B cell (primary cell): ENCODE measurements at regions of chr18 and their contacts with region 1.

Region 1: GRCh38 chr18:35343936-35344735 is at the start of gene ZNF24:
- DNase-seq: peak; percentile 96
- ATAC-seq: peak; percentile 84
- H3K4me3 ChIP-seq: peak within 1 kb of the TSS; percentile 84 to 99 (median 97)
- H3K4me3 Mint-ChIP-seq: peak within 1 kb of the TSS; percentile 100
- H3K27ac ChIP-seq: peak within 1 kb of the TSS; percentile 99
- H3K27ac Mint-ChIP-seq: peak within 1 kb of the TSS; percentile 99
- H3K4me1 ChIP-seq: peaks cover 24 to 35% of the 10 kb centered on the region in 2 donors
- H3K4me1 Mint-ChIP-seq: peaks cover 64% of the 10 kb centered on the region
- H3K27me3 ChIP-seq: no peaks in the 10 kb centered on the region
- H3K27me3 Mint-ChIP-seq: no peaks in the 10 kb centered on the region
- CTCF ChIP-seq: no peak
- total RNA-seq, gene ZNF24: 80.1 and 83.7 TPM in 2 replicates

Region 2: DNA sequence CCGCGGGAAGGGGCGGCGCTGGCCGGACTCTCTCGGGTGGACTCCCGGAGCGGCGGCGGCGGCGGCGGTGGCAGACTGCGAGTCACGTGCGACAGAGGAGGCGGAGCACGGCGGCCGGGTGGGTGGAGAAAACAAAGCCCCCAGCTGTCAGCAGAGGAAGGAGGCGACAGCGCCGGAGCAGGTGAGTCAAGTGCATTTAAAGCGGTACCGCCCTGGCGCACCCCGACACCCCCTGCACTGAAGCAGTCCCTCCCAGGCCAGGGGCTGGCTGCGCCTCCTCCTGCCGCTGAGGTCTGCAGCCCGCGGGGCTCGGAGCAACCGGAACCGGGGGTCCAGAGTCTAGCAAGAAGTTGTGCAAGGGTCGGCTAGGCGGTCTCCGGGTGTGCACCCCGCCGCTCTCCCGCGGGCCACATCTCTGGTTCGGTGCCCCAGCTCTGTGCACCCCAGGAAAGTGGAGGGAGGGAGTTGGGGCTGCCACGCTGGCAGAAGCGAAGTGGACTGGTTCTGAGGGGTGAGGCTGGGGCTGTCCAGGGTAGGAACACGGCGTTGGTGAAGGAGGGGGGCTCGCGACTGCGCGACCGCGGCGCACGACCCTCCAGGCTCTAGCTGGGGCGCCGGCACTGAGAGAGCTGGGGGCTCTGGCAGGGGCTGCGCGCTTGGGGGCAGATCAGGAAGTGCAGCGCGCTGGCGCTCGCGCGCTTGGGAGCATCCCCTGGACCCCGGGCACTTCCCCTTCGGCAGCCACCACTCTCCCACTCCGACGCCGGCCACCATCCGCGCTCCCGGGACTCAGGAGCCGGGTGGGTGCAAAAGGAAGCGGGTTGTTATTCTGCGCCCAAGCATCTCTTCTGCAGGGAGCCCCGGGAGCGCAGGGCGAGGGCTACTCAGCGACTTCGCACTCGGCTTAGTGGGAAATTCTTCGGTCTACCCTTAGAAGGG is 367.0 kb before region 1 on chr18:
- CTCF ChIA-PET with region 1: no interaction called
- POLR2A ChIA-PET with region 1: no interaction called
- intact Hi-C with region 1: loop called (anchors 2 kb)
- DNase-seq: peak; percentile 83
- ATAC-seq: peak; percentile 79
- H3K4me3 ChIP-seq: peak overlapping the region; percentile 81 to 96 (median 89)
- H3K4me3 Mint-ChIP-seq: peak overlapping the region; percentile 92
- H3K27ac ChIP-seq: peak overlapping the region in 1 of 2 donors; percentile 16
- H3K27ac Mint-ChIP-seq: no peak overlapping the region
- H3K4me1 ChIP-seq: peaks cover 17 to 26% of the 10 kb centered on the region in 2 donors
- H3K4me1 Mint-ChIP-seq: peaks cover 26% of the 10 kb centered on the region
- H3K27me3 ChIP-seq: peaks cover 0 to 20% (median 11%) of the 10 kb centered on the region in 4 experiments
- H3K27me3 Mint-ChIP-seq: peaks cover 26% of the 10 kb centered on the region
- CTCF ChIP-seq: no peak

Region 3: GRCh38 chr18:35267161-35267651 is 76.9 kb before region 1 on chr18:
- CTCF ChIA-PET with region 1: no interaction called
- POLR2A ChIA-PET with region 1: interaction called, 8 read pairs
- intact Hi-C with region 1: loop called (anchors 1 kb)
- DNase-seq: peak; percentile 84
- ATAC-seq: peak; percentile 85
- H3K4me3 ChIP-seq: peak overlapping the region; percentile 34 to 79 (median 76)
- H3K4me3 Mint-ChIP-seq: peak overlapping the region; percentile 95
- H3K27ac ChIP-seq: peak overlapping the region; percentile 81 to 93
- H3K27ac Mint-ChIP-seq: peak overlapping the region; percentile 95
- H3K4me1 ChIP-seq: peaks cover 18 to 23% of the 10 kb centered on the region in 2 donors
- H3K4me1 Mint-ChIP-seq: peaks cover 31% of the 10 kb centered on the region
- H3K27me3 ChIP-seq: no peaks in the 10 kb centered on the region
- H3K27me3 Mint-ChIP-seq: no peaks in the 10 kb centered on the region
- CTCF ChIP-seq: no peak

Region 4: GRCh38 chr18:35355140-35355618 is 11.0 kb after region 1 on chr18:
- CTCF ChIA-PET with region 1: interaction called, 22 read pairs
- POLR2A ChIA-PET with region 1: no interaction called
- intact Hi-C with region 1: loop called (anchors 1 kb)
- DNase-seq: peak; percentile 85
- ATAC-seq: peak; percentile 99
- H3K4me3 ChIP-seq: no peak overlapping the region
- H3K4me3 Mint-ChIP-seq: no peak overlapping the region
- H3K27ac ChIP-seq: no peak overlapping the region
- H3K27ac Mint-ChIP-seq: no peak overlapping the region
- H3K4me1 ChIP-seq: no peaks in the 10 kb centered on the region
- H3K4me1 Mint-ChIP-seq: no peaks in the 10 kb centered on the region
- H3K27me3 ChIP-seq: no peaks in the 10 kb centered on the region
- H3K27me3 Mint-ChIP-seq: no peaks in the 10 kb centered on the region
- CTCF ChIP-seq: peak; percentile 76

Region 5: GRCh38 chr18:35497370-35498197 is 153.4 kb after region 1 on chr18 and contains the start of gene INO80C:
- CTCF ChIA-PET with region 1: interaction called, 3 read pairs
- POLR2A ChIA-PET with region 1: interaction called, 3 read pairs
- intact Hi-C with region 1: loop called (anchors 2 kb)
- DNase-seq: peak; percentile 97
- ATAC-seq: peak; percentile 89
- H3K4me3 ChIP-seq: peak within 1 kb of the TSS; percentile 64 to 98 (median 94)
- H3K4me3 Mint-ChIP-seq: peak within 1 kb of the TSS; percentile 94
- H3K27ac ChIP-seq: peak within 1 kb of the TSS; percentile 92 to 95
- H3K27ac Mint-ChIP-seq: peak within 1 kb of the TSS; percentile 99
- H3K4me1 ChIP-seq: peaks cover 21 to 25% of the 10 kb centered on the region in 2 donors
- H3K4me1 Mint-ChIP-seq: peaks cover 53% of the 10 kb centered on the region
- H3K27me3 ChIP-seq: no peaks in the 10 kb centered on the region
- H3K27me3 Mint-ChIP-seq: no peaks in the 10 kb centered on the region
- CTCF ChIP-seq: no peak
- total RNA-seq, gene INO80C: 37.9 and 38.5 TPM in 2 replicates